ENCODE measurements at regions of chr2 and their contacts with region 1.

Region 1: DNA sequence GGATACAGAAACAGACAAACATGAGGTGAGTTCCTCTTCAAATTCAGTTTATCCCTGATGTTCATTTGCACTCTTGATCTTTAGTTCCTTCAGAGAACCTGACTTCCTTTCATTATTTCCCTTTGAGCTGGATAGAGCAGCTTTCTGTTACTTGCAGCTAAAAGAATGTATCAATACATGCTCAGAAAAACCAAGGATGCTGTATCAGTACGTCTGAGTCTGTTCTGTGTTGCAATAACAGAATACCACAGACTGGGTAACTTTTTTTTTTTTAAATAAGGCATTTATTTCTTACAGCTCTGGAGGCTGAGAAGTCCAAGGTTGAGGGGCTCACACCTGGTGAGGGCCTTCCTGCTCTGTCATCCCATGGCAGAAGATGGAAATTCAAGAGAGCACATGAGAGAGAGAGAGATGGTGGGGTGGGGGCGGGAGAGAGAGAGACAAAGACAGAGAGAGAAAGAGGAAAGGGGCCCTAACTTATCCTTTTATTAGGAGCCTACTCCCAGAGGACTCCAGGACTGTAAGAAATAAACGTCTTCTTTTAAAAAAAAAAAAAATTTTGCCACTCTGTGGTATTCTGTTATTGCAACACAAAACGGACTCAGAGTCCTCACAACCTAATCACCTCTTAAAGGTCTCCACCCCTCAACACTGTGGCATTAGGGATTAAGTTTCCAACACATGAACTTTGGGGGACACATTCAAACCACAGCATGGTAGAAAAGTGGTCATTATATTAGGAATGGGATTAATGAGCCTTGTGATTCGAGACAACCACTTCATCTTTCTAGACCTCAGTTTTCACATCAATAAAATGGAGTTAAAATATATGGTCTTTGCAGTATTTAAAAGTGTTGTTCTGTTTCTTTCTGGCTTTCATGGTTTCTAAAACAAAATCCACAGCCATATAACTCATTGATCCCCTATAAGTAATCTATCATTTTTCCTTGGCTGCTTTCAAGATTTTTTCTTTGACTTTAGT is 18.4 kb upstream of the SELENOI start:
- DNase-seq: no peak
- H3K4me3 ChIP-seq: no peak overlapping the region
- H3K27ac ChIP-seq: no peak overlapping the region
- H3K4me1 ChIP-seq: no peaks in the 10 kb centered on the region
- H3K27me3 ChIP-seq: no peaks in the 10 kb centered on the region
- CTCF ChIP-seq: no peak
- POLR2A ChIP-seq: no peak

Region 2: GRCh38 chr2:26178746-26179436 is 148.7 kb before region 1 on chr2:
- intact Hi-C with region 1: loop called (anchors 10 kb)
- DNase-seq: peak in 1 of 2 donors; percentile 19
- H3K4me3 ChIP-seq: peak overlapping the region in 1 of 3 donors; percentile 45
- H3K27ac ChIP-seq: no peak overlapping the region
- H3K4me1 ChIP-seq: peaks cover 11 to 15% of the 10 kb centered on the region in 2 donors
- H3K27me3 ChIP-seq: peaks cover 2% of the 10 kb centered on the region
- CTCF ChIP-seq: no peak
- POLR2A ChIP-seq: no peak

Region 3: DNA sequence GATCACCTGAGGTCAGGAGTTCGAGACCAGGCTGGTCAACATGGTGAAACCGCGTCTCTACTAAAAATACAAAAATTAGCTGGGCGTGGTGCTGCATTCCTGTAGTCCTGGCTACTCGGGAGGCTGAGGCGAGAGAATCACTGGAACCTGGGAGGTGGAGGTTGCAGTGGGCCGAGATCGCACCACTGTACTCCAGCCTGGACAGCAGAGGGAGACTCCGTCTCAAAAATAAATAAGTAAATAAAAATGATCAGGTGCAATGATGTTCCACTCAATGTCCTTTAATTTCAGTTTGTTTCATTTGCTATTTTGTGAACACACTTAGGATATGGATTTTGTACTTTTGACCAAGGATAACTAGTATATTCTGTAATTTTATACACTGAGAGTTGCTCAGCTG is 92.5 kb before region 1 on chr2:
- intact Hi-C with region 1: loop called (anchors 5 kb)
- DNase-seq: no peak
- H3K4me3 ChIP-seq: no peak overlapping the region
- H3K27ac ChIP-seq: no peak overlapping the region
- H3K4me1 ChIP-seq: peaks cover 0 to under 1% of the 10 kb centered on the region in 2 donors
- H3K27me3 ChIP-seq: no peaks in the 10 kb centered on the region
- CTCF ChIP-seq: peak in 2 of 6 experiments; percentile 23 to 29
- POLR2A ChIP-seq: no peak

Region 4: GRCh38 chr2:26704441-26704977 is 376.9 kb after region 1 on chr2:
- intact Hi-C with region 1: no loop called
- DNase-seq: no peak
- H3K4me3 ChIP-seq: no peak overlapping the region
- H3K27ac ChIP-seq: peak overlapping the region in 2 of 3 donors; percentile 36
- H3K4me1 ChIP-seq: peaks cover 41 to 67% of the 10 kb centered on the region in 2 donors
- H3K27me3 ChIP-seq: no peaks in the 10 kb centered on the region
- CTCF ChIP-seq: no peak
- POLR2A ChIP-seq: no peak